ENCODE measurements at regions of chr10 and their contacts with region 1.

Region 1: DNA sequence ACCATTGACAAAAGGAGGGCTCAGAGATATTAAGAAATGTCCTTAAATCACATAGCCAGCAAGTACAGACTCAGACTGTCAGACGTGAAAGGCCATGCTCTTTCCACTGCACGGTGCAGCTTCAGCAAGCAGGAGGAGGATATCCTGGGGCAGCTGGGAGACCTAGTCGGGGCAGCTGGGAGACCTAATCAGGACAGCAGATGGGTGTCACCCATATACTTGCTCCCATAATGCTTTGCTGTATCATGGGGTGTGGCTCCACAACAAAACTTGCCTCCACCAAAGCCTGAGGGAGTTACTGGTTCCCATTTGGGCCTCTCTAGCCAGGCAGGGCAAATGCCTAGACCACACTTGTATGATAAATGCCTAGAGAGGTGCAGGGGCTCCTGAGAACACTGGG is 55.4 kb downstream of the GRID1 start:
- DNase-seq: no peak
- ATAC-seq: no peak
- H3K4me3 ChIP-seq: no peak overlapping the region
- H3K27ac ChIP-seq: no peak overlapping the region
- H3K4me1 ChIP-seq: no peaks in the 10 kb centered on the region
- H3K27me3 ChIP-seq: no peaks in the 10 kb centered on the region
- CTCF ChIP-seq: no peak

Region 2: GRCh38 chr10:86267286-86268195 is 43.6 kb before region 1 on chr10:
- intact Hi-C with region 1: no loop called
- DNase-seq: no peak
- ATAC-seq: no peak
- H3K4me3 ChIP-seq: no peak overlapping the region
- H3K27ac ChIP-seq: no peak overlapping the region
- H3K4me1 ChIP-seq: peaks cover 0 to 8% (median 0%) of the 10 kb centered on the region in 9 donors
- H3K27me3 ChIP-seq: peaks cover 0 to 43% (median 28%) of the 10 kb centered on the region in 7 donors
- CTCF ChIP-seq: no peak

Region 3: DNA sequence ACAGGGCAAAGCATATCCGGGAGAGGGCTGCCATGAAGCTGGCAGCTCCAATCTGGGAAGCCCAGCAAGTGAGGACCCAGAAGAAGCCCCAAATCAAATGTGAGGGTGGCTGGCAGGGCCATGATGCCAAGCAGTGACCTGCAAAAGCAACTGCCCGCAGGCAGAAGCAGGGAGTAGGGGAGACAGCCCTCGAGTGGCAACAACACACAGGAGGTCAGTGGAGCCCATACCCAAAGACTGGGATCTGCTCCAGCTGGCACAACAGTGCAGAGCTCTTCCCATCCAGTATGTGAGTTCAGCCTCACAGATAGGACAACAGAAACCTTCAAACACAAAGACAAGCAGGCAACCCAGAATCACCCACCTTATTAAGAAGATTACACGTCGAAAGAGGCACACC is 10.4 kb after region 1 on chr10:
- intact Hi-C with region 1: loop called in 1 of 10 experiments (anchors 1 kb)
- DNase-seq: no peak
- ATAC-seq: peak in 4 of 8 donors; percentile 55 to 85 (median 74)
- H3K4me3 ChIP-seq: no peak overlapping the region
- H3K27ac ChIP-seq: no peak overlapping the region
- H3K4me1 ChIP-seq: peaks cover 0 to 3% (median 0%) of the 10 kb centered on the region in 9 donors
- H3K27me3 ChIP-seq: peaks cover 0 to 13% (median 0%) of the 10 kb centered on the region in 7 donors
- CTCF ChIP-seq: no peak

Region 4: GRCh38 chr10:86334488-86335085 is 23.4 kb after region 1 on chr10:
- intact Hi-C with region 1: no loop called
- DNase-seq: no peak
- ATAC-seq: no peak
- H3K4me3 ChIP-seq: no peak overlapping the region
- H3K27ac ChIP-seq: no peak overlapping the region
- H3K4me1 ChIP-seq: no peaks in the 10 kb centered on the region
- H3K27me3 ChIP-seq: peaks cover 0 to 4% (median 0%) of the 10 kb centered on the region in 7 donors
- CTCF ChIP-seq: no peak

Region 5: GRCh38 chr10:86451604-86451960 is 140.4 kb after region 1 on chr10:
- intact Hi-C with region 1: no loop called
- DNase-seq: no peak
- ATAC-seq: no peak
- H3K4me3 ChIP-seq: no peak overlapping the region
- H3K27ac ChIP-seq: no peak overlapping the region
- H3K4me1 ChIP-seq: peaks cover 0 to 32% (median 0%) of the 10 kb centered on the region in 9 donors
- H3K27me3 ChIP-seq: no peaks in the 10 kb centered on the region
- CTCF ChIP-seq: no peak